CD4-positive, alpha-beta memory T cell (primary cell): ENCODE measurements at regions of chr3 and their contacts with region 1.

Region 1: DNA sequence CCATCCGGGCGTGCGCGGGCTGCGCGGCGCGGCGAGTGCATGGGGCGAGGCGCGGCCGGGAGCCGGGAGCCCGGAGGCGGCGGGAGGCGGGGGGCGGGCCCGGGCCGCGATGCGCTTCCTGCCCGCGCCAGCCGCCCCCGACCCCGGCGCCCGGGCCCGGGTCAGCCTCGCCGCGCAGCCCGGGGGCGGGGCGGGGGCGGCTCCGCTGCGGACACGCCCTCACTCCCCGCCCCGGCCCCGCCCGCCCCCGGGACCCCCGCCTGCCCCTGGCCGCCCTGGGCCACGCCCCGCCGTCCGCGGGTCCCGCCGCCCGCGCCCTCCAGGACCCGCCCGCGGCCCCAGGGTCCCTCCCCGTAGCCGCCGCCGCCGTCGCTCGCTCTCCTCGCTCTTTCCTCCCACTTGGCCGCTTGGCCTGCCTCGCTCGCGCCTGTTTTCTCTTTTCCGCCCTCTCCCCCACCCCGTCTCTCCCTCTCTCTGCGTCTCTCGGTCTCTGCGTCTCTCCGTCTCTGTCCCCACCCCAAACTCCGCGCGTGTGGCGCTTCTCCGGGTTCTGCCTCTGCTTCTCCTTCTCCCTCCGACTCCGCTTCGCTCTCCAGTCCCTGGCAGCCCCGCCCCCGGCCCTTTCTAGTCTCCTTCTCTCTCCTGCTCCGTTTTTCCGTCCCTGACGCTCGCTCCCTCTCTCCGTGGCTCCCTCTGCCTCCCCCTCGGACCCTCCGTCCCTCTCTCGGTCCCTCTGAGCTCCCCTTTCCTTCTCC is at the start of gene PLXND1:
- DNase-seq: peak in 4 of 5 donors; percentile 36 to 55 (median 46)
- H3K4me3 ChIP-seq: peak within 1 kb of the TSS in 1 of 2 donors; percentile 62
- H3K4me3 Mint-ChIP-seq: peak within 1 kb of the TSS; percentile 91 to 99 (median 95)
- H3K27ac ChIP-seq: no peak within 1 kb of the TSS
- H3K27ac Mint-ChIP-seq: peak within 1 kb of the TSS; percentile 81 to 99 (median 93)
- H3K4me1 ChIP-seq: peaks cover 28% of the 10 kb centered on the region
- H3K4me1 Mint-ChIP-seq: peaks cover 21 to 50% (median 32%) of the 10 kb centered on the region in 4 donors
- H3K27me3 ChIP-seq: no peaks in the 10 kb centered on the region
- H3K27me3 Mint-ChIP-seq: peaks cover 2 to 4% of the 10 kb centered on the region in 2 donors
- total RNA-seq, gene PLXND1: 71.4 to 72.5 TPM

Region 2: DNA sequence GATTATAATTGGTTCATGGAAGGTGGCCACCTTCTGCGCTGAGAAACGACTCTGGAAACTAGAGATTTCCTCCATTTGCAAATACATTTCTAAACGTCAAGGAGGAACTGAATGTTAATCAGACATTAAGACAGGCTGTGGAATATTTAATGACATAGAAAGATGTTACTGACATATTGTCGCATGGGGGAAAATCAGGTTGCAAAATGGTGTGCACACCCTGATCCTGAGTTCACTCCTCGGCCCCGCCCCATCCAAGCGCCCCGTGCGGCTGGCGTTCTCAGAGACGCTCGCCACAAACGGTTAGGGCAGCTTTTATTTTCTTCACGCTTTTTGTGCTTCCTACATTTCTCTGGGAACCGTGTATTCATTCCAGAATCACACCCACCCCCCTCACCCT is 53.1 kb before region 1 on chr3:
- CTCF ChIA-PET with region 1: no interaction called
- POLR2A ChIA-PET with region 1: interaction called, 12 read pairs
- intact Hi-C with region 1: loop called (anchors 10 kb)
- DNase-seq: no peak
- H3K4me3 ChIP-seq: no peak overlapping the region
- H3K4me3 Mint-ChIP-seq: peak overlapping the region in 6 of 8 donors; percentile 0 to 57 (median 28)
- H3K27ac ChIP-seq: no peak overlapping the region
- H3K27ac Mint-ChIP-seq: peak overlapping the region in 2 of 7 donors; percentile 5 to 76
- H3K4me1 ChIP-seq: peaks cover 8% of the 10 kb centered on the region
- H3K4me1 Mint-ChIP-seq: peaks cover 4 to 24% (median 19%) of the 10 kb centered on the region in 4 donors
- H3K27me3 ChIP-seq: no peaks in the 10 kb centered on the region
- H3K27me3 Mint-ChIP-seq: no peaks in the 10 kb centered on the region

Region 3: DNA sequence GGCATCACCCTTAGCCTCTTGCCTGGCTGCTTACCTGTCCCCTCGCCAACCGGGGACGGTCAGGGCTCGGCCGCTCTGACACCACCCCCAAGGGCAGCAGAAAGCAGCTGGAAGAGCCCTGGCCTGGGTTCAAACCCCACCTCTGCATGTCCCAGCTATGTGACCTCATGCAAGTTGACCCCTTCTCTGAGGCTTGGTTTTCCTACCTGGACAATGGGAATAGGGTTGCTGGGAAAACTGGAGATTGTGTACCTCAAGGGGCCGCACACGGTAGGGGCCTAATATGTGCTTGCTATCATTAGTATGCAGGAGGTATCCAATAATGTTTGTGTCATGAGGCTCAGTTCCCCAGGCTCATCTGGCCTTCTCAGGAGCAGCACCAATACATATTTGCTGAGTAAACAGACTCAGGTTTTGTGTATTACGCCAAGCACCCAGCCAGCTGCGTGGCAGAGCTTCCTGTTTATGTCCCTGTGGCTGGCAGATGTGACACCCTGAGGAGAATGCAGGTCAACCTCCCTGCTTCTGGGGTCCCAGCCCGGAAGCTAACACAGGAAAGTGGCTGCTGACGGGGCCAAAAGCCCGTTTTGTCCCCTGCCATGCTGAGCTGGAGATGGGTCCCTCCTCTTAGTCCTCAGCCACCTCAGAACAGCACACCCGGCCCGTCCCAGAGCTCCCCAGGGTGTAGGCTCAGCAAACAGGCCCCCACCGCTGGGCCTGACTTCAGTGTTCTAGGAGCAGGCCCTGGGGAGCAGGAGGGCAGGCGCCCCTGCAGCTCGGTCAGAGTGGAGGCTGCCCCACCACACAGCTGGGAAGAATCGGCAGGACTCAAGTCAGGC is 30.1 kb before region 1 on chr3:
- CTCF ChIA-PET with region 1: interaction called, 12 read pairs
- POLR2A ChIA-PET with region 1: interaction called, 154 read pairs
- intact Hi-C with region 1: loop called (anchors 1 kb)
- DNase-seq: peak; percentile 84 to 90 (median 89)
- H3K4me3 ChIP-seq: peak overlapping the region in 1 of 2 donors; percentile 12
- H3K4me3 Mint-ChIP-seq: peak overlapping the region in 7 of 8 donors; percentile 53 to 79 (median 71)
- H3K27ac ChIP-seq: peak overlapping the region; percentile 67
- H3K27ac Mint-ChIP-seq: peak overlapping the region; percentile 90 to 98 (median 98)
- H3K4me1 ChIP-seq: peaks cover 54% of the 10 kb centered on the region
- H3K4me1 Mint-ChIP-seq: peaks cover 17 to 58% (median 39%) of the 10 kb centered on the region in 4 donors
- H3K27me3 ChIP-seq: no peaks in the 10 kb centered on the region
- H3K27me3 Mint-ChIP-seq: no peaks in the 10 kb centered on the region

Region 4: DNA sequence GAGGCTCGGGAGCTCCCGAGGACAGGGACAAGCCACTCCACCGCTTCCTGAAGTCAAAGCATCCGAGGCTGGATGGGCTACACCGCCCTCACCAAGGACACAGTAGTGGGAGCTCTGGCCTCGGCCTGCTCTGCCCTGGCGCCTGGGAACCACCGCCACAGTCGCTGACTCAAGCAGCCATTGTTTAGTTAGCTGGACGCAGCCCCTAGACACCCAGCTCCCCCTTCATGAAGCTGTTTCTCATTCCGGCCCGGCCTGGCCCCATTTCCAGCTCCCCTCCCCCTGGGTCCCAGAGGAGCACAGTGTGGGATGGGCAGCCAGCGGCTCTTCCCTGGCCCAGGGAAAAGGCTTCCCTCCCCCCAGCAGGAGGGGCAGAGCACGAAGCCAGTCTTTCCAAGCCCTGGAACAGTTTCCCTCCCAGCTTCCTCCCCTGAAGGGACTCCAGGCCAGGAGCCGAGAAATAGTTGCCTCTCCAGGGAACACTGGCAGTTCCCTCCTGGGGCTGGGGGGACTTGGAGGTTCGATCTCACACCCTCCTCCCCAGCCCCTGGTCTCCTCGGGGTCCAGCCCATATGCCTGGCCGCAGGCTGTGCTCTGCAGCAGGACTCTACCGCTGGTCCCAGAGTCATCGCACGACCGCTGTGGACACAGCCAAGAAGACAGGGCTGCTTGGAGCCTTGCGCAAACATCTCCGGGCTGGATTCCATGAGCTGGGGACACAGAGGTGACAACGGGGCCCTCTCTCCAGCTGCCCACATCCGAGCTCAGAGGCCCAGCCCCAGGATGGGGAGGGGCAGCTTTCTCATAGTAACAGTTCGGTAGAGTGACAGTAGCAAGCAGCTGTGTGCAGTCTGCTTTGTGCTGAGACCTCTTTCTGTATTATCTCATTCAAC is 10.4 kb before region 1 on chr3:
- CTCF ChIA-PET with region 1: interaction called, 13 read pairs
- POLR2A ChIA-PET with region 1: interaction called, 83 read pairs
- intact Hi-C with region 1: no loop called
- DNase-seq: no peak
- H3K4me3 ChIP-seq: no peak overlapping the region
- H3K4me3 Mint-ChIP-seq: peak overlapping the region in 1 of 8 donors; percentile 26
- H3K27ac ChIP-seq: no peak overlapping the region
- H3K27ac Mint-ChIP-seq: peak overlapping the region in 1 of 7 donors; percentile 29
- H3K4me1 ChIP-seq: peaks cover 27% of the 10 kb centered on the region
- H3K4me1 Mint-ChIP-seq: peaks cover 19 to 60% (median 41%) of the 10 kb centered on the region in 4 donors
- H3K27me3 ChIP-seq: no peaks in the 10 kb centered on the region
- H3K27me3 Mint-ChIP-seq: no peaks in the 10 kb centered on the region